HepG2 (cell line): ENCODE measurements at regions of chr7 and their contacts with region 1.

Region 1: DNA sequence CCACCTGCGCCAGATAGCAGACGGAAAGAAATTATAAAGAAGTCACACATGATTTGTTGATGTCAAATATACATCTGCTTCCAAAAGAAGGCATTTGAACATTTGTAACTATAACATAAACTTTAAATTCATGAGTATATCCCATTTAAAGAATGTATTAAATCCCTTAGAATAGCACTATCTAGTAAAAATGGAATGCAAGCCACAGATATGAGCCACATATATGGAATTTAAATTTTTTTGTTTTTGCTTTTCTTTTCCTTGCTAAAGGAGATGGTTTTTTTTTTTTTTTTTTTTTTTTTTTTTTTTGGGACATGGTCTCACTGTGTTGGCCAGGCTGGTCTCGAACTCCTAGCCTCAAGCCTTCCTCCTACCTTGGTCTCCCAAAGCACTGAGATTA is 730.8 kb downstream of the PHTF2 start:
- DNase-seq: no peak
- ATAC-seq: no peak
- H3K4me3 ChIP-seq: no peak overlapping the region
- H3K27ac ChIP-seq: no peak overlapping the region
- H3K4me1 ChIP-seq: no peaks in the 10 kb centered on the region
- H3K27me3 ChIP-seq: no peaks in the 10 kb centered on the region
- CTCF ChIP-seq: no peak
- EP300 ChIP-seq: no peak
- POLR2A ChIP-seq: no peak
- RAD21 ChIP-seq: no peak

Region 2: GRCh38 chr7:78607099-78607498 is 77.7 kb after region 1 on chr7:
- CTCF ChIA-PET with region 1: no interaction called
- POLR2A ChIA-PET with region 1: no interaction called
- in situ Hi-C with region 1: no loop called
- intact Hi-C with region 1: no loop called
- DNase-seq: no peak
- ATAC-seq: no peak
- H3K4me3 ChIP-seq: no peak overlapping the region
- H3K27ac ChIP-seq: no peak overlapping the region
- H3K4me1 ChIP-seq: no peaks in the 10 kb centered on the region
- H3K27me3 ChIP-seq: no peaks in the 10 kb centered on the region
- CTCF ChIP-seq: no peak; the same call in 1 of the 2 replicates
- EP300 ChIP-seq: no peak
- POLR2A ChIP-seq: no peak
- RAD21 ChIP-seq: no peak

Region 3: GRCh38 chr7:78900806-78901205 is 371.4 kb after region 1 on chr7:
- CTCF ChIA-PET with region 1: no interaction called
- POLR2A ChIA-PET with region 1: no interaction called
- in situ Hi-C with region 1: no loop called
- intact Hi-C with region 1: loop called (anchors 5 kb)
- DNase-seq: no peak
- ATAC-seq: no peak
- H3K4me3 ChIP-seq: no peak overlapping the region
- H3K27ac ChIP-seq: no peak overlapping the region
- H3K4me1 ChIP-seq: no peaks in the 10 kb centered on the region
- H3K27me3 ChIP-seq: no peaks in the 10 kb centered on the region; a peak in 1 of 5 replicates
- CTCF ChIP-seq: no peak
- EP300 ChIP-seq: no peak
- POLR2A ChIP-seq: no peak
- RAD21 ChIP-seq: no peak